ENCODE measurements at regions of chr10 and their contacts with region 1.

Region 1: DNA sequence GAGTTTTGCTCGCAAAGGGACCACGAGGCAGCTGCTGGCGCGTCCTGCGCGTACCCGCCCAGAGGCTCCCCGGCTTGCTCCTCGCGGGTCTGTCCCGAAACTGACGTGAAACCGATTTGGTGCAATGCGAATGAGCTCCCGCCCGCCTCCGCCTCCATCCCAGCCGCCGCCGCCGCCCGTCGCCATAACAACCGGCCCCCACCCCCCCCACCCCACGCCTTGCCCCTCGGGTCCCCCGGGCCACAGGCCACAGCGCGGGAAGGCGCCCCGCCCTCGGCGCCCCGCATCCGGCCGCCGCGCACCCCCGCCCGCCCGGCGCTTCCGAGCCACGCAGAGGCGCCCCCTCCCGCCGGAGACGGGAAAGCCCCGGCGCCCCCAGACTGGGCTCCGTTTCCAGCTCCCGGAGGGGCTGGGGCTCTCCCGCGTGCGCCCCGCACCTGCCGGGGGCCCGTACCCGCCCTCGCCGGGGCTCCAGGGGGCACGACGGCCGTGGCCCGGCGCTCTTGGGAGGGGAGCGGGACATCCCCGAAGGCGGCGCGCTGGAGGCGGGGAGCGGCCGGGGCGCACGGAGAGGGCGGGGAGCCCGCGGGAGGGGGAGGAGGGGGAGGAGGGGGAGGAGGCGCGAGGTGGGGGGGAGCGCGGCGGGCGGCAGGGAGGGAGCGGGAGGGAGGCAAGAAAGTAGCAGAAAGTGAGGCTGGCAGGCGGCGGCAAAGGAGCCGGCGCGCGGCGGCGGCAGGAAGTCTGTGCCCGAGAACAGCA is at the start of gene CAMK1D:
- DNase-seq: peak; percentile 79
- H3K4me3 Mint-ChIP-seq: peak within 1 kb of the TSS; percentile 90
- H3K27ac Mint-ChIP-seq: peak within 1 kb of the TSS; percentile 97
- H3K4me1 Mint-ChIP-seq: peaks cover 37% of the 10 kb centered on the region
- H3K27me3 Mint-ChIP-seq: peaks cover 60% of the 10 kb centered on the region
- total RNA-seq, gene CAMK1D: 6.8 and 7.4 TPM in 2 replicates

Region 2: DNA sequence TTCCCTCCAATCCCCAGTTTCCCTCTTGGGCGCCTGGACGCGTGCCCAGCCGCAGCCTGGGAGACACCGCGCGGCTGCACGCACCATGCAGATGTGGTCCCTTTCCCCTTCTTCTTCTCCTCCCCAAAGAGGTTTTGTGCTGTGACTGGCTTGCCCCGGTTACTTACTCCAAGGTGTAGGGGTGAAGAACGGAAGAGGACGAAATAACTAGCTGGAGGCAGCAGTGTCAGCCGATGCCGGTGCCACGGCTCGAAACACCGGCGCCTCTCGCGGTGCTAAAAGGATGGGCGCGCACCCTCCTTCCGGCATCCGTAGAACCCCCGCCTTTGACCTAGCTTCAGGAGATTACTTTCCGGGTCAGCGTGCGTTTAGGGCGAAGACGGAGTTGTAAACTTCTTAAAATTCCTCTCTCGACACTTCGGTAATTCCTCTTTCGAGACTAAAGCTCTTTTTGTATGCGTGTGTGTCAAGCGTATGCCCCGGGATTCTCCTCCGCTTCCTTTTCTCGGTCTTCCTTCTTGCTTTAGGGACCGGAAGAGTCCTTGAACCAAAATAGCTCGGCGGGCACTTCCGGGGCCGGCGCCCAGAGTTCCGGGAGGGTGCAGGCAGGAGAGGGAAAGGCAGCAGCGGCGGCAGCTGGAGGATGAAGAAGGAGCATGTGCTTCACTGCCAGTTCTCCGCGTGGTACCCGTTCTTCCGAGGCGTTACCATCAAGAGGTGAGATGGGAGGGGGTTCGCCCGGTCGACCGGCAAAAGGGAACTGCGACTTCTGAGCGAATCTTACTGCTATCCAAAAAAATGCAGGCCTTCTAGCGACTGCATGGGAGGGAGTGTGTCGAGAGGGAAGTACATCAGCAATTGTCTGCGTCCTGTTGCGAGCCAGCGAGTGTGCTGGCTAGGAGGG is 153.2 kb before region 1 on chr10 and contains the starts of genes CDC123 and NUDT5:
- intact Hi-C with region 1: loop called (anchors 5 kb)
- DNase-seq: peak; percentile 83
- H3K4me3 Mint-ChIP-seq: peak within 1 kb of the TSS; percentile 90
- H3K27ac Mint-ChIP-seq: peak within 1 kb of the TSS; percentile 97
- H3K4me1 Mint-ChIP-seq: peaks cover 60% of the 10 kb centered on the region
- H3K27me3 Mint-ChIP-seq: no peaks in the 10 kb centered on the region
- total RNA-seq, gene CDC123: 190 and 191 TPM in 2 replicates
- total RNA-seq, gene NUDT5: 121 and 131 TPM in 2 replicates

Region 3: GRCh38 chr10:12264204-12264940 is 84.7 kb before region 1 on chr10:
- intact Hi-C with region 1: loop called (anchors 1 kb)
- DNase-seq: peak; percentile 63
- H3K4me3 Mint-ChIP-seq: peak overlapping the region; percentile 82
- H3K27ac Mint-ChIP-seq: peak overlapping the region; percentile 98
- H3K4me1 Mint-ChIP-seq: peaks cover 23% of the 10 kb centered on the region
- H3K27me3 Mint-ChIP-seq: peaks cover 1% of the 10 kb centered on the region

Region 4: DNA sequence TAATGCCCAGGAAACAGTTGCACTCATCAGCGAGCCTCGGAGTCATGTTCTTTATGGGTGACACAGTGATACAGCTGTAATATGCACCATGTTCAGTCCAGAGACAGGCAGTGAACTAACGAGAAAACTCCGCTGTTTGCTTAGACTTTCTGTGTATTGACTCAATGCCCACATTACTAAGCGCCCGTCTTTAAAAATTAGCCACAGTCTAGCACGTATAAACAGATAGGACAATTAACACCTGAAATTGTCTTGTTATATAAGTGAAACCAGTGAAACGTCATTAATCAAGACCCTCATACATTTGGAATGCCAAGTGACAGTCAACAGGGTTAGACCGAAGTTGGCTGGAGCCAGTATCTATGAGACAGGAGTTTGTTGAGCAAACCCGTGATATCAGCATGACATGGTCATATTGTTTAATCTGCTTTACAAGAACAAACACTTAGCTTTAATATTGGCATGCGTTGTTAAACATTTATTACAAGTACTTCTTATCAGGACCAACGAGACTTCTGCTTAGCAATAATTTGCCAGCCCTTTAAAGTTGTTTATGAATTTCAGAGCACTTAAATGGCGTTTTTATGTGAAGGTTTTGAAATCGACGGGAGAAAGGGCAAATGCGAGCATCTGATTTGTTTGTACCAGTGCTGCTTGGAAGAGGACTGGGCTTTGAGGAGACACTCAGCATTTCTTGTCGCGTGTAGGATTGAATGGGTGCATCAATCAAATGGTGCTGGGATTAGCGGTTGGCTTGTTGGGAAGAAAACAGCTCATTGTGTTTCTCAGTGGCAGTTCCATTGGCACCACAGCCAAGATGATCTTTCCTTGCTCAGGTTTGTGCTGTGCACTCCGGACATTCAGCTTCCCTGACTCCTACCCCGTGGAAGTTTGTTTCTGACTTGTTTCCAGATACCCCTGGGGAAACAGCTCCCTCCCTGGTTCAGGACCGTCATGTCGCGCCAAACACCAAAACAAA is 56.6 kb after region 1 on chr10:
- intact Hi-C with region 1: loop called (anchors 1 kb)
- DNase-seq: no peak
- H3K4me3 Mint-ChIP-seq: no peak overlapping the region
- H3K27ac Mint-ChIP-seq: peak overlapping the region; percentile 15
- H3K4me1 Mint-ChIP-seq: peaks cover 40% of the 10 kb centered on the region
- H3K27me3 Mint-ChIP-seq: peaks cover 18% of the 10 kb centered on the region

Region 5: DNA sequence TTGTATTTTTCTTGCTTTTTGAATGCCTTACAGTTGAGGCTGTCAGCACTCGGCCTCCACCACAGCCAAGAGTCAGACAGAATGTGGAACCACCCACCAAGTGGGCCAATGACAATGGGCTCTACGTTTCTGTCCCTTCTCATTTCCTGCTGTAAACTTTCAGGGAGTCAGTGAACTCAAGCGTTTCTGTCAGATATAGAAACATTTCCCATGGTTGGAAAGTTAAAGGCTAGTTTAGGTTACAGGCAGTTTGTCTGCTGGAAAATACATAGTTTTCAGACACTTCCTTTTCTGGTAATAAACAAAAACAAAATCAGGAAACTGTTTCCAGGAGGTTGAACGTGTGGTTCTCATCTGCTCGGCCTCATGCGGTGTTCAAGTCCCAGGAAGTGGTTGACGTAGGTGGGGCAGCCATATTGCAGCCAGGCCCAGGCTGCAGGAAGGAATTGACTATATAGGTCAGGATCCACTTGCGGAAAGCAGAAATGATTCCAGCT is 245.4 kb after region 1 on chr10:
- intact Hi-C with region 1: loop called (anchors 5 kb)
- DNase-seq: peak; percentile 64
- H3K4me3 Mint-ChIP-seq: peak overlapping the region; percentile 45
- H3K27ac Mint-ChIP-seq: peak overlapping the region; percentile 90
- H3K4me1 Mint-ChIP-seq: peaks cover 95% of the 10 kb centered on the region
- H3K27me3 Mint-ChIP-seq: no peaks in the 10 kb centered on the region

Region 6: GRCh38 chr10:12656518-12657142 is 307.6 kb after region 1 on chr10:
- intact Hi-C with region 1: loop called (anchors 1 kb)
- DNase-seq: peak; percentile 6
- H3K4me3 Mint-ChIP-seq: no peak overlapping the region
- H3K27ac Mint-ChIP-seq: peak overlapping the region; percentile 34
- H3K4me1 Mint-ChIP-seq: peaks cover 34% of the 10 kb centered on the region
- H3K27me3 Mint-ChIP-seq: no peaks in the 10 kb centered on the region

Measured in activated T-helper 1 cell treated with anti-CD3 and anti-CD28 coated beads, Interleukin-12 subunit alpha, Interleukin-12 subunit beta, Interleukin-2, Interleukin-4 antibody, amounts not matched to agents 30 ng/mL and 10 ng/mL and 1 ng/mL, durations not matched to agents 14 hours and 24 hours and 36 hours (primary cell).